ENCODE measurements at regions of chr16 and their contacts with region 1.

Region 1: GRCh38 chr16:89700100-89700648 is 1.3 kb downstream of the SPATA2L start:
- DNase-seq: peak; percentile 99 to 100 (median 100)
- H3K4me3 ChIP-seq: peak overlapping the region; percentile 55
- H3K27ac ChIP-seq: peak overlapping the region; percentile 58 to 66
- H3K4me1 ChIP-seq: peaks cover 11% of the 10 kb centered on the region
- H3K27me3 ChIP-seq: no peaks in the 10 kb centered on the region
- CTCF ChIP-seq: peak; percentile 90 to 98 (median 91)
- EP300 ChIP-seq: peak; percentile 51
- POLR2A ChIP-seq: peak; percentile 49

Region 2: GRCh38 chr16:89798832-89799370 is 98.7 kb after region 1 on chr16:
- intact Hi-C with region 1: loop called in 2 of 4 experiments (anchors 10 kb)
- DNase-seq: no peak
- H3K4me3 ChIP-seq: no peak overlapping the region
- H3K27ac ChIP-seq: no peak overlapping the region
- H3K4me1 ChIP-seq: no peaks in the 10 kb centered on the region
- H3K27me3 ChIP-seq: no peaks in the 10 kb centered on the region
- CTCF ChIP-seq: no peak
- EP300 ChIP-seq: no peak
- POLR2A ChIP-seq: no peak

Region 3: DNA sequence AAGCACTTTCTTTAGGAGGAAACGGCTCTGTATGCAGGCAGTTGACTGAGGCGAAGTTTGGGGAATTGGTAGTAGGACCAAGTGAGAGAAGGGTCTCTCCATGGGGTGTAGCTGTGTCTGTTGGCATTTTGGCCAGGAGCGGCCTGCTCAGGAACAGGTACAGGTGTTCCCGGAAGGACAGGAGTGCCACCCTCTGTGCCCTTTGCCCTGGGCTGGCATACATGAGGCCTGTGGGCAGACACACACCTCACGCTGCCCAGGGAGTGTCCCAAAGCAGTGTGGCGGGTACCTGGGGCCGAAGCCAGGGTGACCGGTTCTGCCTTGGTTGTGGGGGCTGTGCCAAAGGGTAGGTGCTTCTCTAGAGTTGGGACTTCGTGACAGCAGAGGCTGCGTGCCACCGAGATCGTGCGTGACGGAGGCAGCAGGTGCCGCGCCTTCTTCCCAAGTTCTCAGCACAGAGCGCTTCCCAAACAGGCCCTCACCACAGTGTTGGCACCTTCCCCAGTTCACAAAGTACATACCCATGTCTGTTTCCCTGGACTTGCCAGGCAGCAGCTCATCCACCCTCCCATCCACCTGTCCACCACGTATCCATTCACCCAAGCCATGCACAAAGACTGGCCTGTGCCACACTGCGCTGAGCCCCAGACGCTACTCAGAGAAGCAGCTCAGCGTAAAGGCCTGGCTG is 153.3 kb after region 1 on chr16:
- intact Hi-C with region 1: loop called in 2 of 4 experiments (anchors 10 kb)
- DNase-seq: no peak
- H3K4me3 ChIP-seq: no peak overlapping the region
- H3K27ac ChIP-seq: no peak overlapping the region
- H3K4me1 ChIP-seq: no peaks in the 10 kb centered on the region
- H3K27me3 ChIP-seq: no peaks in the 10 kb centered on the region
- CTCF ChIP-seq: no peak
- EP300 ChIP-seq: no peak
- POLR2A ChIP-seq: no peak